PC-3 (cell line): ENCODE measurements at regions of chr2 and their contacts with region 1.

Region 1: DNA sequence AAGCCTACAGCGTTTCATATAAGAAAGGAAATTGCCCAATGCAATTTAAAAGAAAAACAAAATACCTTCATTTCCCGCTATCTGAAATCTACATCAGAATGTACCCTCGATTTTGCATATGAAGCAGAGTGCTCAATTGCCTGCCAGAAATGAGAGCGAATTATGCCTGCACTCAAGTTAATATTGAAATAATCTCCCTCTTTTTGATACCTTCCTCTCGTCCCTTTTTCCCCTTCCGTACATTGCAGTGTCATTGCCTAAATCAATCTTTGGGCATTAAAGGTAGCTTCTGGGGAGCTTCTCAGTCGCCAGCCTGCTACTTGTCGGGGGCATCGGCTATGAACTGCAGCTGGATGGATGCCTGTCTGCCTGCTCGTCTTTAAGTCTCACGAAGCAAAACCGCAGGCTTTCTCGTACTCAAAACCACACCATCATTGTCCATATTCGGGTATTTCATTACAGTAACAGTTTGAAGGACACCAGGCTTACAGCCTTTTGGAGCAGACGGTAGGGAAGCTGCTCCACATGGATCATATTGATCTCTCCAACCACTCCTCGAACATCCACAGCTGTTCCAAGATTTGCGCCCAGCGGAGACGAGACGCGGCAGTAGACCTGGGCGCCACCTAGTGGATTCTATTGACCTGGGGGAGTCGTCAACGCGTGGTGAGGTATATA is 64.0 kb upstream of the HNRNPA3 start:
- DNase-seq: peak; percentile 88
- ATAC-seq: peak; percentile 99
- H3K4me3 ChIP-seq: peak overlapping the region; percentile 62
- H3K27ac ChIP-seq: no peak overlapping the region
- H3K4me1 ChIP-seq: peaks cover 9% of the 10 kb centered on the region; the same call in 1 of the 2 replicates
- H3K27me3 ChIP-seq: peaks cover 46% of the 10 kb centered on the region
- CTCF ChIP-seq: peak; percentile 95

Region 2: GRCh38 chr2:176110975-176111663 is 1037.5 kb before region 1 on chr2:
- CTCF ChIA-PET with region 1: no interaction called
- POLR2A ChIA-PET with region 1: no interaction called
- intact Hi-C with region 1: loop called (anchors 5 kb)
- DNase-seq: peak; percentile 65
- ATAC-seq: peak; percentile 72
- H3K4me3 ChIP-seq: no peak overlapping the region
- H3K27ac ChIP-seq: no peak overlapping the region
- H3K4me1 ChIP-seq: peaks cover 4% of the 10 kb centered on the region; the same call in 1 of the 2 replicates
- H3K27me3 ChIP-seq: peaks cover 38% of the 10 kb centered on the region
- CTCF ChIP-seq: peak; percentile 91

Region 3: GRCh38 chr2:176653479-176654443 is 494.9 kb before region 1 on chr2:
- CTCF ChIA-PET with region 1: interaction called, 5 read pairs
- POLR2A ChIA-PET with region 1: no interaction called
- intact Hi-C with region 1: loop called (anchors 2 kb)
- DNase-seq: peak; percentile 89
- ATAC-seq: peak; percentile 89
- H3K4me3 ChIP-seq: no peak overlapping the region
- H3K27ac ChIP-seq: no peak overlapping the region
- H3K4me1 ChIP-seq: no peaks in the 10 kb centered on the region
- H3K27me3 ChIP-seq: no peaks in the 10 kb centered on the region
- CTCF ChIP-seq: peak; percentile 85

Region 4: DNA sequence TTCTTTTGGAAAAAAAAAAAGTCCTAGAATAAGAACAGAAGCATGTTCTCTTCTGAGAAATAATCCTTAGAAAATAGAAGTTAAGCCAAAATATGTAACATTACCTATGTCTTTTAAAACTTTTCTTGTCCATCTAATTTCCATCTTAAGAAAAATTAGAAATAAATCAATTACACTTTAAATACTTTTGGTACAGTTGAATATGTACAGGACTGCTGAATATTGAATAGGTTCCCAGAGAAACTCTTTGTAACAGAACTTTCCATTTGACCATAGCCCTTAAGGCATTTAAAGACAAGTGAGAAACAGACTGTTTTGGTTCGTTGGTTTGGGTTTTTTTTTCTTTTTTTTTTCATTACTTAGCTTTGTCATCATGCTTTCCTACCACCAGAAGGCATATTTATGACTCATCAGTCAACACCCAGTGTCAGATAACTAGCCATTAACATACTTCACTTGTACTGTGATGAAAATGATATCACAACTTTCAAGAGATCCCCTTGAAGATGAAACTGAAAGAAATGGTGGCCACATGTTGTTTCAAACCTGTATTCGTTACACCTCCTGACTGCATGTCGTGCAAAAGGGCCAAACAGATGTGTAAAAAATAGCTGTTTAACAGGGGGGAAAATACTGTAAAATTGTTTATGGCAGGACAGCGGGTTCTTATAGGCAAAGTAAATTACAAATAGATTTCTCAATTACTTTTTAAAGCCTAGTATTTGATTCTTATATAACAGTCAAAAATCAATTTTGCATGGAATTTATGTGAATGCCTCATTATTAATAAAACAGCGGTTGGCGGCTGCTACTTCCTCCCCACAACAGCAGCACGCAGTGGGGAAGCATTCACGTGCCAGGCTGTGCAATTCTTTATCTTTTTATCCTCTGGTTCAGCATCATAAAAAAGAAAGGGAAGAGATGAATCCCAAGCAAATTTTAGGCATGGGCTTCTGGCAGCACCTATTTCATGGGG is 216.7 kb before region 1 on chr2:
- CTCF ChIA-PET with region 1: no interaction called
- POLR2A ChIA-PET with region 1: no interaction called
- intact Hi-C with region 1: loop called (anchors 5 kb)
- DNase-seq: peak; percentile 24
- ATAC-seq: no peak; the same call in 1 of the 2 replicates
- H3K4me3 ChIP-seq: no peak overlapping the region
- H3K27ac ChIP-seq: no peak overlapping the region
- H3K4me1 ChIP-seq: no peaks in the 10 kb centered on the region
- H3K27me3 ChIP-seq: peaks cover 41% of the 10 kb centered on the region
- CTCF ChIP-seq: no peak

Region 5: GRCh38 chr2:177029480-177029879 is 119.1 kb before region 1 on chr2:
- CTCF ChIA-PET with region 1: no interaction called
- POLR2A ChIA-PET with region 1: no interaction called
- intact Hi-C with region 1: loop called (anchors 10 kb)
- DNase-seq: peak; percentile 48
- ATAC-seq: peak; percentile 56
- H3K4me3 ChIP-seq: no peak overlapping the region
- H3K27ac ChIP-seq: no peak overlapping the region
- H3K4me1 ChIP-seq: no peaks in the 10 kb centered on the region
- H3K27me3 ChIP-seq: peaks cover 56% of the 10 kb centered on the region
- CTCF ChIP-seq: peak; percentile 66

Region 6: DNA sequence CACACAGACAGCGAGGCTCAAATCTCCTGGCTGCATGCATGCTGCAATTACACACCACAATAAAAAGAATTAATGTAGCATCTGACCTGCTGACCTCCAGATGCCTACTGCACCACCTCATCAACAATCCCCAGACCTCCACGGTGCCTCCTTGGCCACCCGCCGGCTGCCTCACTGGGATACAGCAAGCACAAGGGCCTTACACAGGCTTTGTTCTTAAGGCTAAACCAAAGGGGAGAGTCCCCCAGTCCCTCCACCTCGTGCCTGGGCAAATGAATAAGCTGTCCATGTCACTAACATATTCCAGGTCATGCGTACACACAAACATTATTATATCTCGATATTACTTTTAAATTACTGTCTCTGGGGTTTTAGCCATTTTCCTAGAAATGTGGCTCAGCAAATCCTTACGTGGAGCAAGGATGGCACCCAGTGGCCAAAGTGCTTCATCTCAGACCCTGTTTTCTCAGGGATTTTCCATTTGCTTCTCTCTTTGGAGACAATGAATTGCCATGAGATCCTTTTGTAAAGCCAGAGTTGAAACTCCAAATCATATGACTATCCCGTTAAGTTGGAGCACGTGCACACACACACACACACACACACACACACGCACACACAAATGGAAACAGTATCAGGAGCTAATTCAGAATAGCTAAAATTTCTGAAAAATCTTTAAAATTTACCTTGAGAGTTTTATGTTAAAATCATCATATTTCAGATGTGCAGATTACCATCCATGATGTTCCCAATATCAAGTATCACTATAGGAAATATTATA is 610.2 kb after region 1 on chr2:
- CTCF ChIA-PET with region 1: no interaction called
- POLR2A ChIA-PET with region 1: no interaction called
- intact Hi-C with region 1: loop called (anchors 10 kb)
- DNase-seq: peak; percentile 59
- ATAC-seq: peak; percentile 23; the same call in 1 of the 2 replicates
- H3K4me3 ChIP-seq: no peak overlapping the region
- H3K27ac ChIP-seq: no peak overlapping the region
- H3K4me1 ChIP-seq: no peaks in the 10 kb centered on the region
- H3K27me3 ChIP-seq: peaks cover 26% of the 10 kb centered on the region; the same call in 1 of the 2 replicates
- CTCF ChIP-seq: peak; percentile 68